Ascending aorta (tissue), 2 donors: ENCODE measurements at regions of chr15 and their contacts with region 1.

Region 1: DNA sequence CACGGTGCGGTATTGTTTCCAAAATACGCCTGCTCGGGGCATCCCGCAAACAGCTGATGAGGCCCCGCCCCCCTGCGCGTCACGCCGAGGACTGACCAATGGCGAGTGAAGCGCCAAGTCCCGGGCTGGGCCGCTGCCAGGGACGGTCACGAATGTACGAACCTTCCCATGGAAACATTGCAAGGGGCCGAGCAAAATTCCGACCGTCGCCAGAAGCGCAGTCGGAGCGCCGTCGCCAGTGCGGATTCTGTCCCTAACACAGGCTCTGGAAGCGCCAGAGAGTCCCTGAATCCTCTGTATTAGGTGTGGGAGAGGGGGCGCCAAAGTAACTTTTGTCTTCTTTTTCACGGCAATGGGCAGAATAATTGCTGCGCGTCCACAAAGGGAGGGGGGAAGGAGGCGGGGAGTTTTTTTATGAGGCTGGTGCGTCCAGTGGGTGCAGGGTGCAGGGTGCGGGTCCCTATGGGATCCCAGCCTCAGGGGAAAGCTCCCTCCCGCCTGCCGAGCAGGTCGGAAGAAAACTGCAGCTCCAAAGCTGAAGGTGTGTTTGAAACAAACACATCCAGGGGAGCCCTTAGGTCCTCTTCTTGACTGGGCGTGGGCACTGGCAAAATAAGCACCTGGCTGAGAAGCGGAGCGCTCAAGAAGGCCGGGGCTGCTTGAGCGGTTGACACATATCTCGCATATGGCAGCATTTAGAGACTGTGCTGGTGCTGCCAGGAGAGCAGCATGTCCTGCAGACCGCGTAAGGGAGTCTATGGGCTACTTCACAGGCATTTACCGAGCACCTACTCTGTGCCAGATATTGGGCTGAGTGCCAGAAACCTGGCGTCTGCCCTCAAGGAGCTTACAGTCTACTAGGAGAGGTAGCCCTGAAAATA is at the start of gene BMF:
- DNase-seq: peak; percentile 99 to 100
- H3K4me3 ChIP-seq: peak within 1 kb of the TSS; percentile 72 to 90
- H3K27ac ChIP-seq: peak within 1 kb of the TSS; percentile 76 to 91
- H3K4me1 ChIP-seq: peaks cover 13 to 34% of the 10 kb centered on the region in 2 donors
- H3K27me3 ChIP-seq: no peaks in the 10 kb centered on the region
- CTCF ChIP-seq: peak in 2 of 3 experiments; percentile 25 to 37
- total RNA-seq, gene BMF: 2.2 TPM

Region 2: DNA sequence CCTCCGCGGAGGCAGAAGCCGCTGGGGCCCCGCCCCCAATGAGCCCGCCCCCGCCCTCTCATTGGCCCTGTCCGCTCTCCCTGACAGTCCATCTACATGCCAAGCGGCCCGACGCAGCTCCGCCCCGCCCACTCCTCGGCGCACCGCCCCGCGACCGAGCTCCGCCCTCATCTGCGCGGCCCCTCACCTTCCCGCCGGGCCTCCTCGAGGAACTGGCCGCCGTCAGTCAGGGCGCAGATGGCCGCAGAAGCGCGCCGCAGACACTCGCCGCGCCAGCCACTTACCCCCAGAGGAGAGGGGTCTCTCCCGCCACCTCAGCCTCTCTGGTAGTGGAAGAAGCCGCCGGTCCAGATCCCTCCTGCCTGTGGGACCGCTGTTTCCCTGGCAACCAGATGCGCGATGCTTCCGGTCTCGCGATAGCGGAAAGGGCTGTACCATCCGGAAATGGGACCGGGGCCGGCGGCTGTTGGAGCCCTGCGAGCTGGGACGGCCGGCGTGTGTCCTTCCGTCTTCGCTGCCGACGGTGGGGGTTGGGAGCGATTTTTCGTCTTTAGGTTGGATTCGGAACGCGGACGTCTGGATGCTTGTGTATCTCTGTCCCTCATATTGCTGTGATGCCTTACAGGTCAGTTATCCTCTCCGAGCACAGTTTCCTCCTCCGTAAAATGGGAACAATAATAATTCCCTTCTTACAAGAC is 326.5 kb before region 1 on chr15 and contains the start of gene FSIP1:
- intact Hi-C with region 1: loop called (anchors 2 kb)
- DNase-seq: peak; percentile 83 to 98
- H3K4me3 ChIP-seq: peak within 1 kb of the TSS; percentile 84 to 94
- H3K27ac ChIP-seq: peak within 1 kb of the TSS; percentile 61 to 81
- H3K4me1 ChIP-seq: peaks cover 0 to 8% of the 10 kb centered on the region in 2 donors
- H3K27me3 ChIP-seq: no peaks in the 10 kb centered on the region
- CTCF ChIP-seq: no peak
- total RNA-seq, gene FSIP1: not detected

Region 3: GRCh38 chr15:40069178-40070165 is 39.6 kb before region 1 on chr15:
- intact Hi-C with region 1: loop called (anchors 1 kb)
- DNase-seq: peak; percentile 65 to 97
- H3K4me3 ChIP-seq: no peak overlapping the region
- H3K27ac ChIP-seq: peak overlapping the region; percentile 75 to 79
- H3K4me1 ChIP-seq: peaks cover 7 to 16% of the 10 kb centered on the region in 2 donors
- H3K27me3 ChIP-seq: no peaks in the 10 kb centered on the region
- CTCF ChIP-seq: no peak

Region 4: GRCh38 chr15:40160689-40161688 is 51.9 kb after region 1 on chr15 and contains the start of gene BUB1B:
- intact Hi-C with region 1: loop called (anchors 2 kb)
- DNase-seq: peak; percentile 74 to 95
- H3K4me3 ChIP-seq: peak within 1 kb of the TSS; percentile 47 to 65
- H3K27ac ChIP-seq: no peak within 1 kb of the TSS
- H3K4me1 ChIP-seq: peaks cover 3 to 5% of the 10 kb centered on the region in 2 donors
- H3K27me3 ChIP-seq: no peaks in the 10 kb centered on the region
- CTCF ChIP-seq: no peak
- total RNA-seq, gene BUB1B: not detected

Region 5: GRCh38 chr15:40338041-40338657 is 229.1 kb after region 1 on chr15:
- intact Hi-C with region 1: loop called (anchors 5 kb)
- DNase-seq: peak in 1 of 2 donors; percentile 89
- H3K4me3 ChIP-seq: peak overlapping the region; percentile 24 to 40
- H3K27ac ChIP-seq: peak overlapping the region; percentile 98 to 99
- H3K4me1 ChIP-seq: peaks cover 62 to 95% of the 10 kb centered on the region in 2 donors
- H3K27me3 ChIP-seq: no peaks in the 10 kb centered on the region
- CTCF ChIP-seq: peak; percentile 56 to 77 (median 68)

Region 6: GRCh38 chr15:40440743-40441564 is 331.9 kb after region 1 on chr15 and contains the start of gene BAHD1:
- intact Hi-C with region 1: loop called (anchors 10 kb)
- DNase-seq: peak; percentile 85 to 97
- H3K4me3 ChIP-seq: peak within 1 kb of the TSS; percentile 95 to 97
- H3K27ac ChIP-seq: peak within 1 kb of the TSS; percentile 31 to 75
- H3K4me1 ChIP-seq: peaks cover 12 to 33% of the 10 kb centered on the region in 2 donors
- H3K27me3 ChIP-seq: peaks cover 11% of the 10 kb centered on the region
- CTCF ChIP-seq: peak in 1 of 3 experiments; percentile 28
- total RNA-seq, gene BAHD1: 10.6 TPM